ENCODE measurements at regions of chr4 and their contacts with region 1.

Region 1: GRCh38 chr4:112231779-112232713 is at the start of gene AP1AR:
- DNase-seq: peak; percentile 87
- H3K4me3 Mint-ChIP-seq: peak within 1 kb of the TSS; percentile 87
- H3K27ac Mint-ChIP-seq: peak within 1 kb of the TSS; percentile 98
- H3K4me1 Mint-ChIP-seq: peaks cover 34% of the 10 kb centered on the region
- H3K27me3 Mint-ChIP-seq: no peaks in the 10 kb centered on the region
- total RNA-seq, gene AP1AR: 15.4 to 19.1 TPM

Region 2: DNA sequence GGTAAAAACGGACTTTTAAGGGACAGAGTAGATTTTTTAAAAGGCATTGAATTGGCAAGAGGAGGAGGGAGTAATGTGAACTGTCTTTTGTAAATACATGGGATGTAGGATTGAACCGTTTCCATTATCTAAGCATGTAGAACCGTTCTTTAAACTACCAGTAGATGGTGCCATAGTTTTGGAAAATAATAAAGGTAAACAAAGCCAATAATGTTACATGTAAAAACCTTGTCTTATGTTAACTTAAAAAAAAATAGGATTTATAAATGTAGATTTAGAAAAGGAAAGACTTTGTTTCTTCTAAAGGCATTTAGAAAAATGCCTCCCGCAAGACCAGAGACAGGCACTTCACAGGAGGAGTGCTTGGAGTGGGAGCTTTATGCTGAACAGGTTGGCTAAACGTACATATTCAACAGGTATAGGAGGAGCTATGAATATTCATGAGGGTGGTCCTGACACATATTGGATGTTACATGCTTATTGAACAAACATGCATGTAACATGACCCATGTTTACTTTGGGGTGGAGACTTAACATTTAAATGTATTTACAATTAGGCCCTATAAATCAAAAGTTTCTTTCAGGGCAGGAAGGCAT is 132.2 kb before region 1 on chr4:
- CTCF ChIA-PET with region 1: interaction called, 118 read pairs
- POLR2A ChIA-PET with region 1: no interaction called
- intact Hi-C with region 1: loop called (anchors 1 kb)
- DNase-seq: no peak
- H3K4me3 Mint-ChIP-seq: no peak overlapping the region
- H3K27ac Mint-ChIP-seq: no peak overlapping the region
- H3K4me1 Mint-ChIP-seq: peaks cover 1% of the 10 kb centered on the region
- H3K27me3 Mint-ChIP-seq: peaks cover 2% of the 10 kb centered on the region

Region 3: DNA sequence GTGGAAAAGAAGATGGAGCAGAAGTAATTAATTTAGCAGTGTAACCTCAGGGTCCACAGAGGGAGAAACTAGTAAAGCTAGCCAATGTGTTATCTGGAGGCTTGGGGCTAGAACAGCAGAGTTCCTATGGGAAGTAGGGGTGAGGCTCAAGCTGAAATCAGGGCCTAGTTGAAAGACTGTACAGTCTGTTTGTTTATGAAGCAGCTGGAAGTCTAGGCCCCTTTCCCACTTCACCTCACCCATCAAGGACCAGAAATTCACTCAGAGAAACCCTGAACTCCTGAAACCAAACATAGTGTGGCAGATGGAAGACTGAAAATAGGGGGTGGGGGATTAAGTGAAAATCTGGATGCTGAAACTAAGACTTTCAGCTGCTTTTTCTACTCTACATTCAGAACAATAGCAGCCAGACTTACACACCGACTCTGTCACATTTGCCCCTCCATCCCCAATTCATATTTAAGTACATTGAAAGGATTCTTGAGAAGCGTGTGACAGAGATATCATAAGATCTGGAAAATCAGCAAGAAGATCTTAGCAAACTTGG is 119.4 kb before region 1 on chr4:
- CTCF ChIA-PET with region 1: no interaction called
- POLR2A ChIA-PET with region 1: no interaction called
- intact Hi-C with region 1: no loop called
- DNase-seq: no peak
- H3K4me3 Mint-ChIP-seq: no peak overlapping the region
- H3K27ac Mint-ChIP-seq: no peak overlapping the region
- H3K4me1 Mint-ChIP-seq: peaks cover 9% of the 10 kb centered on the region
- H3K27me3 Mint-ChIP-seq: no peaks in the 10 kb centered on the region

Region 4: DNA sequence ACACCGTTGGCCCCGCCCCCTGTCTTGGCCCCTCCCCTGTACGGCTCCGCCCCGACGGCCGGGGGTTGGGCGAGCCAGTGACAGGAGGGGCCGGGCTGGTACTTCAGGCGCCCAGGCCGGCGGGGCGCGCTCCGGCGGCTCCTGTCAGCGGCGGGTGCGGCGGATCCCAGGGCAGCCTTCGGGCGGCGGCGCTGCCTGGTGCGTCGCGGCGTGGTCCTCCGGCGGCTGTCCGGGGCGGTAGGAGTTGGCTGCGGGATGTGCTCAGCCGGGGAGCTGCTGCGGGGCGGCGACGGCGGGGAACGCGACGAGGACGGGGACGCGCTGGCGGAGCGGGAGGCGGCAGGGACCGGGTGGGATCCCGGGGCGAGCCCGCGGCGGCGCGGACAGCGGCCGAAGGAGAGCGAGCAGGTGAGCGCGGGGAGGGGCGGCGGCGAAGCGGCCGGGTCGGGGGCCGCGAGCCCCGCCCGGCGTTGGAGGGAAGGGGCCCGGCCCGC is 86.7 kb before region 1 on chr4 and contains the start of gene FAM241A:
- CTCF ChIA-PET with region 1: interaction called, 5 read pairs
- POLR2A ChIA-PET with region 1: no interaction called
- intact Hi-C with region 1: loop called (anchors 1 kb)
- DNase-seq: peak; percentile 92
- H3K4me3 Mint-ChIP-seq: peak within 1 kb of the TSS; percentile 87
- H3K27ac Mint-ChIP-seq: peak within 1 kb of the TSS; percentile 84
- H3K4me1 Mint-ChIP-seq: peaks cover 42% of the 10 kb centered on the region
- H3K27me3 Mint-ChIP-seq: no peaks in the 10 kb centered on the region
- total RNA-seq, gene FAM241A: 3.1 to 3.5 TPM

Region 5: GRCh38 chr4:112270640-112271393 is 38.8 kb after region 1 on chr4:
- CTCF ChIA-PET with region 1: interaction called, 5 read pairs
- POLR2A ChIA-PET with region 1: no interaction called
- intact Hi-C with region 1: loop called (anchors 1 kb)
- DNase-seq: no peak
- H3K4me3 Mint-ChIP-seq: no peak overlapping the region
- H3K27ac Mint-ChIP-seq: peak overlapping the region; percentile 77
- H3K4me1 Mint-ChIP-seq: peaks cover 60% of the 10 kb centered on the region
- H3K27me3 Mint-ChIP-seq: no peaks in the 10 kb centered on the region

Measured in activated CD4-positive, alpha-beta memory T cell treated with anti-CD3 and anti-CD28 coated beads for 36 hours (primary cell).